ENCODE measurements at regions of chr3 and their contacts with region 1.

Region 1: GRCh38 chr3:82133070-82133606 is 371.7 kb upstream of the GBE1 start:
- DNase-seq: peak; percentile 73
- H3K4me3 ChIP-seq: no peak overlapping the region
- H3K27ac ChIP-seq: no peak overlapping the region
- H3K4me1 ChIP-seq: peaks cover 0 to 4% (median 0%) of the 10 kb centered on the region in 4 donors
- H3K27me3 ChIP-seq: no peaks in the 10 kb centered on the region
- CTCF ChIP-seq: peak; percentile 39 to 80 (median 66)
- EP300 ChIP-seq: no peak
- POLR2A ChIP-seq: no peak

Region 2: DNA sequence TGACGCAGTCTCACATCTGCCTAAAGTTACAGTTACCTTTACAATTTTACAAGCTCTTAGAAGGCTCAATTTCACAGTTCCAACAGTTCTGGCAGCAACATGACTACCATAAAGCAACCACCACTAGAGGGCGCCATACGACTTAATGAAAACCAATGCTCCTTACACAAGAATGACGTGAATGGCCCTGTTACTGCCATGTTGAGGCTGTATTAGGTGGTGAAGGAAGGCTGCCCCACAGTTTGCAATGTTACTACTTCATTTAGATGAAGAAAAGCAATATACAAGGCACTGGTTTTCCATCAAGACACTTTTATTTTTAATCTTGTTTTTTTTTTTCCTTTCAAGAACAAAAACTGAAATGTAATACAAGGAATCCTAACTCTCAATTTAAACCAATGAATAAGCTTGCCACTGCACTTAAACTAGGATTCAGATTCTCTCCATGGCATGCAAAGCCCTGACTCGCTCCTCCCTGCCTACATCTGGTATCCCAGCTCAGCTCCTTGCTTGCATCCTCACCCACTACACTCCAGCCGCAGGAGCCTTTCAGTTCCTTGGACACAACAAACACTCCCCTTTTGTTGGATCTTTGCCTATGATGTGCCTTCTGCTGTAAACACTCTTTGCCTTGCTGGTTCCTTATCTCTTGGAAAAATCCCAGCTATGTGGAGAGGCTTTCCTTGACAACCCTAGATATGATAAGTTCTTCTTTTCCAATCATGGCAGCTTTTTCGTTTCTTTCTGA is 642.4 kb before region 1 on chr3:
- intact Hi-C with region 1: loop called (anchors 5 kb)
- DNase-seq: peak; percentile 74
- H3K4me3 ChIP-seq: no peak overlapping the region
- H3K27ac ChIP-seq: no peak overlapping the region
- H3K4me1 ChIP-seq: peaks cover 0 to 22% (median 7%) of the 10 kb centered on the region in 4 donors
- H3K27me3 ChIP-seq: no peaks in the 10 kb centered on the region
- CTCF ChIP-seq: peak in 3 of 4 experiments; percentile 54 to 69 (median 60)
- EP300 ChIP-seq: no peak
- POLR2A ChIP-seq: no peak

Region 3: DNA sequence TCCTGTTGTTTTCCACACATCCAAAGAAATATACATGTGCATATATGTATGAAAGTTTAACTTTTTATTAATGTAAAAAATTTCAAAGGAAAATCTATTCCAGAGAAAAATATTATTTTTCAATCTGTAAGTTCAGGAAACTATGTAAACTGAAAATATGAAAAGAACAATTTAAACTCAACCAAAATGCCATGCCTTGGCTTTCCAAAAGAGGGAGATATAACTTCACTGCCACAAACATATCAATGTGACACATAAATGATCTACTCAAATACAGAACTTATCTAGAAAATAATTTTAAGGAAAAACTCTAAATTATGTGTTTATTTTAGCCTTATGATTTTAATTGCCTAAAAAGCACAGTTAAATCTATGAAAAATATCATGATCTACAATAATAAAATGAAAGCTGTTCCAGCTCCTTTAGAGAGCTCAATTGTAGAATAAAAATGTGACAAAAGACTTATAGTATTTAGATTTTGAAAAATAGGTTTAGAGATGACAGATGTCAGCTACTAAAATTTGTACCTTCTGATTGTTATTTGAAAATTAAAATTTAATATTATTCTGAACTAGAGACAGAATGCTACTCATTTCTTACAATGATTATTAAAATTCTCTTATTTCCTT is 466.5 kb before region 1 on chr3:
- intact Hi-C with region 1: loop called (anchors 5 kb)
- DNase-seq: no peak
- H3K4me3 ChIP-seq: no peak overlapping the region
- H3K27ac ChIP-seq: no peak overlapping the region
- H3K4me1 ChIP-seq: no peaks in the 10 kb centered on the region
- H3K27me3 ChIP-seq: no peaks in the 10 kb centered on the region
- CTCF ChIP-seq: peak in 3 of 4 experiments; percentile 27 to 56 (median 37)
- EP300 ChIP-seq: no peak
- POLR2A ChIP-seq: no peak

Region 4: DNA sequence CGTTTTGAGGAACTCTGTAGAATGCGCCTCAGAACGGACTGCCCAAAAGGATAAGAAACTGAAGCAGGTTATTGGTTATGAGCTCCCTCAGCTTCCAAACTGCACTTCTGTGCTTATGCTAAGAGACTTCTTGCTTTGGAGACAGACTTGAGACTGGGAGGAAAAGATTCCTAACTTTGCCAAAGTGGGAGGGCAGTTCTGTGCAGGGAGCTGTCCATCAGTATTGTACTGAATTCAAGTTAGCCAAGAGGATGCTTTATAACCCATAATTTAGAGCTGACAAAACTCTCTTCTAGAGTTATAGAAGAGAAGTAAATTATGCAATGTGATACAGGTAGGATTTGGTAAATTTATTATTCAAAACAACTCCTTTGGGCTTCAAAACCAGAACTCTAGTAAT is 148.1 kb after region 1 on chr3:
- intact Hi-C with region 1: no loop called
- DNase-seq: no peak
- H3K4me3 ChIP-seq: no peak overlapping the region
- H3K27ac ChIP-seq: no peak overlapping the region
- H3K4me1 ChIP-seq: no peaks in the 10 kb centered on the region
- H3K27me3 ChIP-seq: no peaks in the 10 kb centered on the region
- CTCF ChIP-seq: no peak
- EP300 ChIP-seq: no peak
- POLR2A ChIP-seq: no peak